MCF 10A (cell line): ENCODE measurements at regions of chr19 and their contacts with region 1.

Region 1: GRCh38 chr19:50794439-50795237 is 4.4 kb downstream of the ACP4 start:
- DNase-seq: peak; percentile 57
- H3K4me3 Mint-ChIP-seq: no peak overlapping the region
- H3K27ac Mint-ChIP-seq: no peak overlapping the region
- H3K4me1 Mint-ChIP-seq: no peaks in the 10 kb centered on the region
- H3K27me3 Mint-ChIP-seq: no peaks in the 10 kb centered on the region
- CTCF ChIP-seq: peak; percentile 7

Region 2: GRCh38 chr19:50329146-50329925 is 465.3 kb before region 1 on chr19 and contains the start of gene KCNC3:
- CTCF ChIA-PET with region 1: no interaction called
- POLR2A ChIA-PET with region 1: no interaction called
- intact Hi-C with region 1: no loop called
- DNase-seq: no peak
- H3K4me3 Mint-ChIP-seq: no peak within 1 kb of the TSS
- H3K27ac Mint-ChIP-seq: no peak within 1 kb of the TSS
- H3K4me1 Mint-ChIP-seq: no peaks in the 10 kb centered on the region
- H3K27me3 Mint-ChIP-seq: peaks cover 54% of the 10 kb centered on the region
- CTCF ChIP-seq: no peak
- total RNA-seq, gene KCNC3: not detected in 2 replicates

Region 3: GRCh38 chr19:50639121-50640112 is 155.2 kb before region 1 on chr19 and contains the start of gene SYT3:
- CTCF ChIA-PET with region 1: no interaction called
- POLR2A ChIA-PET with region 1: no interaction called
- intact Hi-C with region 1: no loop called
- DNase-seq: no peak
- H3K4me3 Mint-ChIP-seq: no peak within 1 kb of the TSS
- H3K27ac Mint-ChIP-seq: no peak within 1 kb of the TSS
- H3K4me1 Mint-ChIP-seq: no peaks in the 10 kb centered on the region
- H3K27me3 Mint-ChIP-seq: peaks cover 24% of the 10 kb centered on the region
- CTCF ChIP-seq: no peak
- total RNA-seq, gene SYT3: not detected in 2 replicates

Region 4: GRCh38 chr19:50804420-50805272 is 10.0 kb after region 1 on chr19:
- CTCF ChIA-PET with region 1: no interaction called
- POLR2A ChIA-PET with region 1: interaction called, 33 read pairs
- intact Hi-C with region 1: no loop called
- DNase-seq: peak; percentile 99
- H3K4me3 Mint-ChIP-seq: peak overlapping the region; percentile 99
- H3K27ac Mint-ChIP-seq: peak overlapping the region; percentile 99
- H3K4me1 Mint-ChIP-seq: peaks cover 21% of the 10 kb centered on the region
- H3K27me3 Mint-ChIP-seq: no peaks in the 10 kb centered on the region
- CTCF ChIP-seq: no peak